Mammary epithelial cell (primary cell): ENCODE measurements at regions of chr11 and their contacts with region 1.

Region 1: GRCh38 chr11:132439711-132440255 is 1069.4 kb downstream of the NTM start:
- DNase-seq: no peak
- H3K4me3 ChIP-seq: no peak overlapping the region
- H3K27ac ChIP-seq: no peak overlapping the region
- H3K4me1 ChIP-seq: no peaks in the 10 kb centered on the region
- H3K27me3 ChIP-seq: peaks cover 3% of the 10 kb centered on the region
- CTCF ChIP-seq: no peak

Region 2: GRCh38 chr11:132258875-132259274 is 180.9 kb before region 1 on chr11:
- CTCF ChIA-PET with region 1: no interaction called
- dilution Hi-C with region 1: no loop called
- in situ Hi-C with region 1: no loop called
- intact Hi-C with region 1: no loop called
- DNase-seq: peak; percentile 62
- H3K4me3 ChIP-seq: no peak overlapping the region
- H3K27ac ChIP-seq: no peak overlapping the region
- H3K4me1 ChIP-seq: no peaks in the 10 kb centered on the region
- H3K27me3 ChIP-seq: no peaks in the 10 kb centered on the region
- CTCF ChIP-seq: no peak

Region 3: DNA sequence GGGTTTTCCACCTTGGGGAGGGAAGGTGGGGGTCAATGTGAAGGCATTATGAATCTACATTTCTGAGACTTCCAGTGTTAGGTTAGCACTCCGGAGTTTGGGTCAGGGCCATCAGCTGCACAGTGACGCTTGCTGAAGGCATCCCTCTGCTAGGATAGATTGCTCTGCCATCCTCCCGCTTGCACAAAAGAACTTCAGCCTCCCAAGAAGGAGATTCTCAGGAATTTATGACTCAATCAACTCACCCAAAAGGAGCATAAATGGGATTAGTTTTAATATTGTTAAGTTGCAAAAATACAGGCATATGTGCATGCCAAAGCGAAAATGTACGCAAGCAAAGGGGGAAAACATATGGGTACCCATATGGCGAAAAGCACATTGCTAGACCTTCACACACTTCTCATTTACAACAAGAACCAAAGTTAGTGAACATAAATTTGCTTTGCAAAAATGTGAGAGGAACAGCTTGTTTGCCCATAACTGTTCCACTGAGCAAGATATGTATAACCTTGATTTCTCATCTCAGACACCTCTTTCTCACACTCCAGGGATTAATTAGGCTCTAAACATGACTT is 79.5 kb after region 1 on chr11:
- CTCF ChIA-PET with region 1: no interaction called
- dilution Hi-C with region 1: loop called (anchors 5 kb)
- in situ Hi-C with region 1: no loop called
- intact Hi-C with region 1: no loop called
- DNase-seq: no peak
- H3K4me3 ChIP-seq: no peak overlapping the region
- H3K27ac ChIP-seq: no peak overlapping the region
- H3K4me1 ChIP-seq: peaks cover 11% of the 10 kb centered on the region
- H3K27me3 ChIP-seq: no peaks in the 10 kb centered on the region
- CTCF ChIP-seq: no peak